Heart left ventricle (tissue), 16 donors: ENCODE measurements at regions of chr15 and their contacts with region 1.

Region 1: DNA sequence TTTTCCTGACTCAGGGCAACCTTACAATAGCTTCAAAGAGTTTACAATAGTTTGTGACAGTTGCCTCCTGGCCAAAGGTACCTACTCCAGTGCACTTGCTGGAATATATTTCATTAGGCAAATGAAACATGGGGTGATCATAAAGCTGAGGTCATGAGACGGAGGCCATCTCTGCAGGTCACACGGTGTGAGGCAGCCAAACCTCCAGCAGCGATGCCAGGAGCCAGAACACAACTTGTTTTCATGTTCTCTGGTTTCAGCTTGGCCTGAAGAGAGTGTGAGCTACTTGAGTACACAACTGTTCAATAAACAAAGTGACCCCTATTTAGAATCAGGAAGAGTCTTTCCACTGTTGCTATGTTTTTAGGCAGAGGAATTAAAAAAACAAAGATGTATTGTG is 42.7 kb upstream of the PYGO1 start:
- DNase-seq: no peak
- ATAC-seq: no peak
- H3K4me3 ChIP-seq: no peak overlapping the region
- H3K27ac ChIP-seq: no peak overlapping the region
- H3K4me1 ChIP-seq: no peaks in the 10 kb centered on the region
- H3K27me3 ChIP-seq: no peaks in the 10 kb centered on the region
- CTCF ChIP-seq: no peak
- POLR2A ChIP-seq: no peak

Region 2: GRCh38 chr15:55526559-55527036 is 104.3 kb before region 1 on chr15:
- intact Hi-C with region 1: loop called in 2 of 10 experiments (anchors 10 kb)
- DNase-seq: no peak
- ATAC-seq: peak in 3 of 4 donors; percentile 34 to 58 (median 44)
- H3K4me3 ChIP-seq: no peak overlapping the region
- H3K27ac ChIP-seq: no peak overlapping the region
- H3K4me1 ChIP-seq: no peaks in the 10 kb centered on the region
- H3K27me3 ChIP-seq: peaks cover 0 to 15% (median 0%) of the 10 kb centered on the region in 9 donors
- CTCF ChIP-seq: peak in 10 of 12 donors; percentile 34 to 65 (median 46)
- POLR2A ChIP-seq: no peak

Region 3: DNA sequence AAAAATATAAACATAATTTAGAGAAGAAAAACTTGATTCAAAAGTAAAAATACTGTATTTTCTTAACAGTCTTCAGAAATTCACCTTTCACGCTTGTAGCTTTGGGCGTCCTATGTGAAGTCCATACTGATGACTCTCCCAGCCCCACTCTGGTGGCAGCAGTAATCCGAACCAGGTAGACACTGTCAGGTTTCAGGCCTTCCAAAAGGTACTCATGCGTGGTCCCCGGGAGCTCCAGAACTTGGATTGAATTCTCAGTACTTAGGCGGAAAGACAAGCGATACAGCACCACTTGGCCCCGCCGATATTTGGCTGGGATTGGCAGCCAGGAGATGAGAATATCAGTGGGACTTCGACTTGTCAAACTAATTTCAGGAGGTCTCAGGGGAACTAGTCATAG is 42.4 kb after region 1 on chr15:
- intact Hi-C with region 1: no loop called
- DNase-seq: no peak
- ATAC-seq: no peak
- H3K4me3 ChIP-seq: no peak overlapping the region
- H3K27ac ChIP-seq: no peak overlapping the region
- H3K4me1 ChIP-seq: no peaks in the 10 kb centered on the region
- H3K27me3 ChIP-seq: no peaks in the 10 kb centered on the region
- CTCF ChIP-seq: no peak
- POLR2A ChIP-seq: no peak

Region 4: GRCh38 chr15:55937040-55937439 is 306.2 kb after region 1 on chr15:
- intact Hi-C with region 1: no loop called
- DNase-seq: no peak
- ATAC-seq: no peak
- H3K4me3 ChIP-seq: no peak overlapping the region
- H3K27ac ChIP-seq: no peak overlapping the region
- H3K4me1 ChIP-seq: peaks cover 0 to 2% (median 0%) of the 10 kb centered on the region in 12 donors
- H3K27me3 ChIP-seq: no peaks in the 10 kb centered on the region
- CTCF ChIP-seq: no peak
- POLR2A ChIP-seq: no peak